A673 (cell line): ENCODE measurements at regions of chr14 and their contacts with region 1.

Region 1: GRCh38 chr14:95683793-95684192 is 2.4 kb upstream of the TCL1B start:
- DNase-seq: peak; percentile 64
- H3K4me3 ChIP-seq: no peak overlapping the region
- H3K27ac ChIP-seq: no peak overlapping the region
- H3K4me1 ChIP-seq: peaks cover 9% of the 10 kb centered on the region
- H3K27me3 ChIP-seq: no peaks in the 10 kb centered on the region
- CTCF ChIP-seq: peak; percentile 90

Region 2: DNA sequence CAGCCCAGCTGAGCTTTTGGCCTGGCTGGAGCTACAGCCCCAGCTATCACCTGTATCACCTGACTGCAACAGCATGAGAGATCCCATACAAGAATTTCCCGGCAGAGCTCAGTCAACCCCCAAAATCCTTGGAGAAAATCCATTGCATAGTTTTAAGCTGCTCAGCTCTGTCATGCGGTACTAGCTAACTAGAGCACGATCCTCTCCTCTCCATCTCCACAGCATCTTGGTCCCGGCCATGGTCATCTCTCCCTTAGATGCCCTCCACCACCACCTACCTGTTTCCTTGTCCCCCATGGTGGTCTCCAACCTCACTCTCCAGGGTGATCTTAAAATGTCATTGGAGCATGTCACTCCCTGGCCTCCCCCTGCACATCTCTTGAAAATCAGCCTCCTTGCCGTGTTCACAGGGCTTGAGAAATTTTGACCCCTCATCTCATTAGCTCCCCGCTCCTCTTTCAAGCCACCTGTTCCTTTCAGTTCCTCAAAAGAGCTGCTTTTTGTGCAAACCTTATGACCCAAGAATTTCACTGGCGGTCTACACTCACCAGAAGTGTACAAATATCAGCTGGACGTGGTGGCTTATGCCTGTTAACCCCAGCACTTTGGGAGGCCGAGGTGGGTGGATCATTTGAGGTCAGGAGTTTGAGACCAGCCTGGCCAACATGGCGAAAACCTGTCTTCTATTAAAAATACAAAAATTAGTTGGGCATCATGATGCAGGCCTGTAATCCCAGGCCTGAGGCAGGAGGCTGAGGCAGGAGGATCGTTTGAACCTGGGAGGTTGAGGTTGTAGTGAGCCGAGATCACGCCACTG is 356.0 kb before region 1 on chr14:
- CTCF ChIA-PET with region 1: no interaction called
- POLR2A ChIA-PET with region 1: no interaction called
- intact Hi-C with region 1: no loop called
- DNase-seq: no peak
- H3K4me3 ChIP-seq: no peak overlapping the region
- H3K27ac ChIP-seq: no peak overlapping the region
- H3K4me1 ChIP-seq: no peaks in the 10 kb centered on the region
- H3K27me3 ChIP-seq: no peaks in the 10 kb centered on the region
- CTCF ChIP-seq: no peak

Region 3: GRCh38 chr14:95561001-95561412 is 122.8 kb before region 1 on chr14:
- CTCF ChIA-PET with region 1: no interaction called
- POLR2A ChIA-PET with region 1: no interaction called
- intact Hi-C with region 1: loop called (anchors 5 kb)
- DNase-seq: peak; percentile 86
- H3K4me3 ChIP-seq: no peak overlapping the region
- H3K27ac ChIP-seq: no peak overlapping the region
- H3K4me1 ChIP-seq: no peaks in the 10 kb centered on the region
- H3K27me3 ChIP-seq: no peaks in the 10 kb centered on the region
- CTCF ChIP-seq: peak; percentile 98

Region 4: GRCh38 chr14:95609387-95609990 is 74.3 kb before region 1 on chr14:
- CTCF ChIA-PET with region 1: no interaction called
- POLR2A ChIA-PET with region 1: no interaction called
- intact Hi-C with region 1: loop called (anchors 1 kb)
- DNase-seq: peak; percentile 79
- H3K4me3 ChIP-seq: no peak overlapping the region
- H3K27ac ChIP-seq: no peak overlapping the region
- H3K4me1 ChIP-seq: no peaks in the 10 kb centered on the region
- H3K27me3 ChIP-seq: peaks cover 3% of the 10 kb centered on the region
- CTCF ChIP-seq: peak; percentile 87

Region 5: DNA sequence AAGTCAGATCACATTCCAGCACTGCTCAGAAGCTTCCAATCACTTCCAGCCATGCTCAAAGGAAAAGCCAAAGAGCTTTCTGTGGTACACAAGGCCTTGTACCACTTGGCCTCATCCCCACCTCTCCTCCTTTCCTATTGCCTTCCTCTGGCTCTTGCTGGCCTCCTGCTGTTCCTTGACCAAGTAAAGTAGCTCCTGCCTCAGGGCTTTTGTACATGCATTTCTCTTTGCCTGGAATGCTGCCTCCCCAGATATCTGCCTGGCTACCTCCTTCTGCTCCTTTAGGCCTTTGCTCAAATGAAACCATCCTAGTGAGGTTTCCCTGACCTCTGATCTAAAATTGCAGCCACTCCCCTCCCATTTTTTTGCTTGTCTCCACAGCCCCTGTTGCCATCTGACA is 48.7 kb before region 1 on chr14:
- CTCF ChIA-PET with region 1: no interaction called
- POLR2A ChIA-PET with region 1: interaction called, 18 read pairs
- intact Hi-C with region 1: no loop called
- DNase-seq: no peak
- H3K4me3 ChIP-seq: no peak overlapping the region
- H3K27ac ChIP-seq: no peak overlapping the region
- H3K4me1 ChIP-seq: no peaks in the 10 kb centered on the region
- H3K27me3 ChIP-seq: no peaks in the 10 kb centered on the region
- CTCF ChIP-seq: no peak

Region 6: GRCh38 chr14:95662376-95663186 is 21.2 kb before region 1 on chr14:
- CTCF ChIA-PET with region 1: no interaction called
- POLR2A ChIA-PET with region 1: interaction called, 21 read pairs
- intact Hi-C with region 1: no loop called
- DNase-seq: no peak
- H3K4me3 ChIP-seq: no peak overlapping the region
- H3K27ac ChIP-seq: no peak overlapping the region
- H3K4me1 ChIP-seq: peaks cover 29% of the 10 kb centered on the region
- H3K27me3 ChIP-seq: no peaks in the 10 kb centered on the region
- CTCF ChIP-seq: no peak